ENCODE measurements at regions of chrX and their contacts with region 1.

Region 1: DNA sequence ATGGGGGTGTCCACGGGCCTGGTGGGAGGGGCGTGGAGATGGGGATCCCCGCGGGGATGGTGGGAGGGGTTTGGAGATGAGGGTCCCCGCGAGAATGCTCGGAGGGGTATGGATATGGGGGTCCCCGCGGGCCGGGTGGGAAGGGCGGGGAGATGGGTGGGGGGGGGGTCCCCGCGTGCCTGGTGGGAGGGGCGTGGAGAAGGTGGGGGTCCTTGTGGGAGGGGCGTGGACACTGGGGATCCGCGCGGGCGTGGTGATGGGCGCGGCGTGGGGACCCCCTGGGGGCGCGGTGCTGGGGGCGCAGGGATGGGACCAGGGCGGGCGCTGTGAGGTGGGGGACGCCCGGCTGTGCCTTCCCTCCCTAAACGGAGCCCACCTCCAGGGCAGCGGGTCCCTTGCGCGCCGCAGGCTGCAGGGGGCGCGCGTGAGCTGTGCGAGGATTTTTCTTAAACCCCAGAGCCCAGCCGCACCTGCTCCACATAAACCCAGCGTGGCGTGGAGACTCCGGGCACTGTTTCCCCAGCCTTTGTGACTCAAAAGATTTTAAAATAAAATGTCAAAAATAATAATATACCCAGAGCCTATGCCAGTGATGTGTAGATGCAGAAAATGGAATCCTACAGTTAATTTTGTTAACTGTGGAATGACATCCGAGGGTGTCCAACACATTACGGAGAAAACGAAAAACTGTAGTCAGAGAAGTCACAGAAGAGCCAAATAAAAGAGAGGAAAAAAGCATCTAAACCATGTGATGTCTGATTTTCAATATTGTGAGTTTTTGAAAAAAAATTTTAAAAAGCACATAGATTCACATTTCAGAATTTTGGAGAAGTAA is 1.5 kb upstream of the ASMTL start:
- DNase-seq: peak; percentile 79 to 94 (median 89)
- H3K4me3 ChIP-seq: peak overlapping the region in 1 of 4 donors; percentile 73
- H3K27ac ChIP-seq: peak overlapping the region in 1 of 5 donors; percentile 100
- H3K4me1 ChIP-seq: peaks cover 8 to 10% of the 10 kb centered on the region in 2 donors
- H3K27me3 ChIP-seq: no peaks in the 10 kb centered on the region
- CTCF ChIP-seq: peak; percentile 93 to 97 (median 96)
- POLR2A ChIP-seq: no peak

Region 2: DNA sequence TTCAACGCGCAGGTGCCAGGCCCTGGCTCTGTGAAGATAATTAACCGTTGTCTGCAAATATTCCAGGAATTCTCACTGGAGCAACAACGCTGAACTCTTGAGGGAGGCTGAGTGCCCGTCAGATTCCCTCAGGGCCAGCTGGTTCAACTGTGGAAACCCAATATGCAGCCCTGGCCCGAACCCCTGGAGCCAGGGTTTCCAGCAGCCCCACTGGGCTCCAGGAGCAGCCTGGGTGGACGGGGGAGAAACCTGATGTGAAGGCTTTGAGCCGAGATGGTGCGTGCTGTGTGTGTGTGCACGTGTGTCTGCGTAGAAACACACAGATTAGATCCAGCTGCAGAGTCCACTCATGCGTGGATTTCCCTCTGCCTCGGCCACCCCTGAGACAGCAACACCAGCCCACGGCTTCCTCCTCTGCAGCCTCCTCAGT is 42.9 kb before region 1 on chrX:
- intact Hi-C with region 1: no loop called
- DNase-seq: peak in 1 of 7 donors; percentile 4
- H3K4me3 ChIP-seq: no peak overlapping the region
- H3K27ac ChIP-seq: no peak overlapping the region
- H3K4me1 ChIP-seq: no peaks in the 10 kb centered on the region
- H3K27me3 ChIP-seq: no peaks in the 10 kb centered on the region
- CTCF ChIP-seq: no peak
- POLR2A ChIP-seq: no peak

Region 3: DNA sequence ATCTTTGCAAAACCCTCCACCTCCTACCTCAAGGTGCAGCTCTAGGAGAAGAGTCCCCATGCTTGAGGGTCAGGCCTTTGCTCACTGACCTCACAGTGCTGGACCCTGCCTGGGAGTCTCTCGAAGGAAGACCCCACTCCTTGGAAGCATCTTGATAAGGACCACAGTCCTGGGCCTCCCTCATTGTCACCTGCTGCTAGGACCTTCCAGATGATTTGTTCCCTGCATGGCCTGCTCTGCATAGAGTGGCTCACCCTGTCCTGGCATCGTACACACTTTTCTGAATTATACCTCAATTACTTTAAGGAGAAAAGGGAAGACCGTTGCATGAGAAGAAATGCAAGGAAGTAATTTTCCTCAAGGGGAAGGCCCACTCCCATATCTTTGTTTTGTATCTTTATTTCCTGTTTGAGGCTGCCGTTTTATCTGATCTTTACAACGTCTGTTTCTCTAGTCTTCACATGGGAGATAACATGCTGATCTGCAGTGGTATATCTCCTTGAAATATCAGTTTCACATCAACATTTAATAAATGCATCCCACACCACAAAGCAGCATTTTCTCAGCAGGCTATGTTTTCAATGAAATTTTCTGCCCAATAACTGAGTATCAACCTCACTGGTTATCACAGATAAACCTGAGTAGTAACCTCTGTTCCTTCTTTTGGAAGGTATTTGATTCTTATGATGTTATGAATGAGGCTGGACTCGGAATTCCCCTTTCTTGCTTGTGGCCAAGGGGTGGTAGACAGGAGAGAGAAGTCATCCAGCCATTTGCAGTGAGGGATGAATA is 122.2 kb after region 1 on chrX:
- intact Hi-C with region 1: loop called in 1 of 2 experiments (anchors 5 kb)
- DNase-seq: no peak
- H3K4me3 ChIP-seq: no peak overlapping the region
- H3K27ac ChIP-seq: no peak overlapping the region
- H3K4me1 ChIP-seq: no peaks in the 10 kb centered on the region
- H3K27me3 ChIP-seq: no peaks in the 10 kb centered on the region
- CTCF ChIP-seq: no peak
- POLR2A ChIP-seq: no peak

Region 4: DNA sequence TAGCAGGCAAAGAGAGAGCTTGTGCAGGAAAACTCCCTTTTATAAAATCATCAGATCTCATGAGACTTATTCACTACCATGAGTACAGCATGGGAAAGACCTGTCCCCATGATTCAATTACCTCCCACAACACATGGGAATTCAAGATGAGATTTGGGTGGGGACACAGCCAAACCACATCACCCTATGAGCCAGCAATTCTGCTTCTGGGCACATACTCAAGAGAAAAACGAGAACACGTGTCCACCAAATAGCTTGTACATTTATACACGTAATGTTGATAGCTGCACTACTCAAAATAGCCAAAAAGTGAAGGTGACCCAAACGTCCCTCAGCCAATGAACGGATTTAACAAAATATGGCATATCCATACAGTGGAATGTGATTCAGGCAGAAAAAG is 1141.1 kb after region 1 on chrX:
- intact Hi-C with region 1: loop called in 1 of 2 experiments (anchors 10 kb)
- DNase-seq: no peak
- H3K4me3 ChIP-seq: no peak overlapping the region
- H3K27ac ChIP-seq: no peak overlapping the region
- H3K4me1 ChIP-seq: no peaks in the 10 kb centered on the region
- H3K27me3 ChIP-seq: no peaks in the 10 kb centered on the region
- CTCF ChIP-seq: no peak
- POLR2A ChIP-seq: no peak

Measured in adrenal gland (tissue), 19 donors.